ENCODE measurements at regions of chr3 and their contacts with region 1.

Region 1: GRCh38 chr3:101954936-101955335 is 105.6 kb downstream of the NFKBIZ start:
- DNase-seq: no peak
- ATAC-seq: no peak
- H3K4me3 ChIP-seq: no peak overlapping the region
- H3K4me3 Mint-ChIP-seq: no peak overlapping the region
- H3K27ac ChIP-seq: no peak overlapping the region
- H3K27ac Mint-ChIP-seq: no peak overlapping the region
- H3K4me1 ChIP-seq: no peaks in the 10 kb centered on the region
- H3K4me1 Mint-ChIP-seq: peaks cover 0 to 16% (median 9%) of the 10 kb centered on the region in 7 donors
- H3K27me3 ChIP-seq: peaks cover 0 to 3% of the 10 kb centered on the region in 2 donors
- H3K27me3 Mint-ChIP-seq: peaks cover 0 to 18% (median 0%) of the 10 kb centered on the region in 5 donors

Region 2: DNA sequence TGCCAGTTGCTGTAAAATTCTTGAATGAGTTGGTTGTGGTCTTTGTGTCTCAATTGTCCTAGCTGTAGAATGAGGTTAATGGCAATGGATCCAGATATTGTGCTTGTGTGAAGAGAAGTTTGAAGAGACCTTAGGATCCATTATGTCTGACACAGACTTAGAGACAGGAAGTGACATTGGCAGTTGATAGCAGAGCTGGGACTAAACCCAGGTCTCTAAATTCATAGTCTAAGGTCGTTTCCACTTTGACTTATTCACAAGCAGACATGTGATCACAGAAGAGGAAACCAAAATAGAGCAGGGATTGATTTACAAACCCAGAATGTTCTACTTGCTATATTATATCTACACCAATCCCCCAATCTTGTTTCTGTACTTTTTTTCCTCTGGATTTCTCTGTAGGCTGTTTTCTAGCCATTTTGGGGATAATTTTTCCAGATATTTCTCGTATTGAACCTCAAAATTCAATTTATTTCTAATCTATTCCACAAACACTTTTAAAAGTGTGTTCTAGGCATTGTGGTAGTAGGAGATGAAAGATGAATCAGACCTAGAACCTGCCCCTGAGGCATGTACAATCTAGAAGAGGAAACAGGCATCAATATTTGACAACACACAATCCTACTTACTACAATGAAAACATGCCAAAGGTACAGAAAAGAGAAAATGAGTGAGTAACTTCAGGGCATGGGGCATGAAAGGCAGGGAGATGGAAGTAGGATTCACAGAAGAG is 17.7 kb after region 1 on chr3:
- CTCF ChIA-PET with region 1: no interaction called
- POLR2A ChIA-PET with region 1: interaction called, 4 read pairs
- intact Hi-C with region 1: loop called in 1 of 2 experiments (anchors 2 kb)
- DNase-seq: peak in 3 of 9 donors; percentile 3 to 9 (median 4)
- ATAC-seq: no peak
- H3K4me3 ChIP-seq: no peak overlapping the region
- H3K4me3 Mint-ChIP-seq: no peak overlapping the region
- H3K27ac ChIP-seq: no peak overlapping the region
- H3K27ac Mint-ChIP-seq: peak overlapping the region in 2 of 9 donors; percentile 10 to 25
- H3K4me1 ChIP-seq: peaks cover 0 to 4% of the 10 kb centered on the region in 2 donors
- H3K4me1 Mint-ChIP-seq: peaks cover 0 to 13% (median 12%) of the 10 kb centered on the region in 7 donors
- H3K27me3 ChIP-seq: no peaks in the 10 kb centered on the region
- H3K27me3 Mint-ChIP-seq: peaks cover 0 to 11% (median 0%) of the 10 kb centered on the region in 5 donors